Testis (tissue), 5 donors: ENCODE measurements at regions of chr15 and their contacts with region 1.

Region 1: GRCh38 chr15:64681424-64682024 is 93.9 kb downstream of the RBPMS2 start:
- DNase-seq: peak; percentile 74
- H3K4me3 ChIP-seq: no peak overlapping the region
- H3K27ac ChIP-seq: no peak overlapping the region
- H3K4me1 ChIP-seq: peaks cover 11% of the 10 kb centered on the region
- H3K27me3 ChIP-seq: no peaks in the 10 kb centered on the region
- CTCF ChIP-seq: peak; percentile 63 to 84 (median 72)
- POLR2A ChIP-seq: no peak

Region 2: GRCh38 chr15:64430000-64430735 is 251.4 kb before region 1 on chr15:
- intact Hi-C with region 1: loop called (anchors 10 kb)
- DNase-seq: peak; percentile 67
- H3K4me3 ChIP-seq: no peak overlapping the region
- H3K27ac ChIP-seq: peak overlapping the region in 1 of 2 donors; percentile 42
- H3K4me1 ChIP-seq: peaks cover 6% of the 10 kb centered on the region
- H3K27me3 ChIP-seq: no peaks in the 10 kb centered on the region
- CTCF ChIP-seq: no peak
- POLR2A ChIP-seq: no peak

Region 3: DNA sequence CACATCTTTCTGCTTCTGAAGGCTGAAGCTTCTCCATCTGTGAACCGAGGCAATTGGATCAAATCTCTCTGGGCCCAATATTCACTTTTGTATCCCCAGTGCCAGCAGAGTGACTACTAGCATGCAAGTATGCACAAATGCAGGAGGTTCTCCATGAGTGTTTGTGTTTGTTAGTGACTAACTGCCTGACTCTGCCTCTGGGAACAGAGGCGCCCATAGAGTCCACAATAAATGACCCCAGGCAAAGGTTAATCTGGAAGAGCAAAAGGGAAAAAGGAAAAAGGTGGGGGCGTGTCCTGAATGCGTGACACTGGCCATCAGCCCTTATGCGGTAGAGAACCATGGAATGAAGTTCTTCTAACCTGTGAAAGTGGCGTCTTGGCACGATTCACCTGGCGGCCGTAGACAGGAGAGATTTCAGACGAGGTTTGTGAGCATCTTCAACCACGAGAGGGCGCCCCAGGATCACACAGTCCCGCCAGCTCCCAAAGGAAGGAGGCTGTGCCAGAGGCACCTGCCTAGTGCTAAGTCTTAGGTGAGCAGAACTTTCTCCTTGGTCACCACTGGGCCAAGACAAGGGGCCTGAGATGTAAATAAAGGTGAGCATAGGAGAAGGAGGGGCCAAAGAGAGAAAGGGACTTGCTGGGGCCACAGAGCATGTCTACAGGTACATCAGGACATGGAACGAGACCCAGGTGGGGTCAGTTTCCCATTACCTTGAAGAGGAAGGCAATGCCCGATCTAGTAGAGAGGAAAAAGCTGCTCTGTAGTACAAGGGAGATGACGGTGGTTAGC is 49.7 kb after region 1 on chr15:
- intact Hi-C with region 1: loop called (anchors 2 kb)
- DNase-seq: peak; percentile 92
- H3K4me3 ChIP-seq: no peak overlapping the region
- H3K27ac ChIP-seq: no peak overlapping the region
- H3K4me1 ChIP-seq: peaks cover 2% of the 10 kb centered on the region
- H3K27me3 ChIP-seq: no peaks in the 10 kb centered on the region
- CTCF ChIP-seq: peak; percentile 83 to 92 (median 84)
- POLR2A ChIP-seq: no peak